ENCODE measurements at regions of chr2 and their contacts with region 1.

Region 1: DNA sequence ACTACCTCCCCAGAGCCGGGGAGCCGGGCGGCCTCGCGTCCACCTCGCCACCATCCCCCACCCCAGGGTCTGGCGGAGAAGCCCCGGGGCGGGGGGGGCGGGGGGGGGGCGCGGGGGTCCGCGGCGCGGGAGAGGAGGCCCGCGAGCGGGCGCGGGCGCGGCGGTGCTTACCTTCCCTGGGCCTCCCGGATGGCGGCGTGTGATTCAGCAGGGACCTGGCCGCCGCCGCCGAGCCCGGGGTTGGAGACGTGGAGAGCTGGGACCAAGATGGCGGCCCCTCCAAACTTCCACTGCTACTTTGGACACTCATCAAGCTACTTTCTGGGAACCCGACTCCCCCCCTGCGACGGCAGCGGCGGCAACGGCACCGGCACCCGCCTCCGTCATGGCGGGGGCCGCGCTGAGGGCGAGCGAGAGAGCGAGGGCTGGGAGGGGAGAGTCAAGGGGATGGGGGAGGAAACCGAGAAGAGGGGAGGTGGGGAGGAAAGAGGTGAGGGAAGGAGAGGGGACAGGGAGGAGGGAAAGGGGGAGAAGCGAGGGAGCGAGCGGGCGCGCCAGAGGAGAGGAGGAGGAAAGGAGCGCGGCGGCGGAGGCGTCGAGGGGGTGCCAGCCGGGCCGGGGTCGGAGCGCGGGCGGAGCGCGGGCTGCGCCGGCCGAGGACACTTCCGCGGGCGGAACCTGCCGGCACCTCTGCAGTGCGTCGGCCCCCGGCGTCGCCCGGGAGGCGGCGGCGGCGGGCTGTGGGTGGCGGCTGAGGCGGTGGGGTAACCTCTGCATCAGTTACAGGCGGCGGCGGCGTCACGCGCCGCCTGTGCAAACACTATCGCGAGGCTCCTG is at the start of gene TLK1:
- DNase-seq: peak; percentile 75
- H3K4me3 ChIP-seq: peak within 1 kb of the TSS; percentile 83 to 97 (median 93)
- H3K27ac ChIP-seq: peak within 1 kb of the TSS; percentile 72
- H3K4me1 ChIP-seq: no peaks in the 10 kb centered on the region
- H3K27me3 ChIP-seq: no peaks in the 10 kb centered on the region
- CTCF ChIP-seq: peak in 1 of 2 donors; percentile 26
- total RNA-seq, gene TLK1: 15.8 to 60.1 TPM

Region 2: GRCh38 chr2:170973492-170974303 is 186.6 kb before region 1 on chr2:
- CTCF ChIA-PET with region 1: no interaction called
- dilution Hi-C with region 1: no loop called
- in situ Hi-C with region 1: no loop called
- intact Hi-C with region 1: loop called (anchors 1 kb)
- DNase-seq: peak; percentile 9
- H3K4me3 ChIP-seq: peak overlapping the region; percentile 51 to 69 (median 65)
- H3K27ac ChIP-seq: peak overlapping the region; percentile 16
- H3K4me1 ChIP-seq: peaks cover 15% of the 10 kb centered on the region
- H3K27me3 ChIP-seq: no peaks in the 10 kb centered on the region
- CTCF ChIP-seq: peak; percentile 68 to 75

Region 3: DNA sequence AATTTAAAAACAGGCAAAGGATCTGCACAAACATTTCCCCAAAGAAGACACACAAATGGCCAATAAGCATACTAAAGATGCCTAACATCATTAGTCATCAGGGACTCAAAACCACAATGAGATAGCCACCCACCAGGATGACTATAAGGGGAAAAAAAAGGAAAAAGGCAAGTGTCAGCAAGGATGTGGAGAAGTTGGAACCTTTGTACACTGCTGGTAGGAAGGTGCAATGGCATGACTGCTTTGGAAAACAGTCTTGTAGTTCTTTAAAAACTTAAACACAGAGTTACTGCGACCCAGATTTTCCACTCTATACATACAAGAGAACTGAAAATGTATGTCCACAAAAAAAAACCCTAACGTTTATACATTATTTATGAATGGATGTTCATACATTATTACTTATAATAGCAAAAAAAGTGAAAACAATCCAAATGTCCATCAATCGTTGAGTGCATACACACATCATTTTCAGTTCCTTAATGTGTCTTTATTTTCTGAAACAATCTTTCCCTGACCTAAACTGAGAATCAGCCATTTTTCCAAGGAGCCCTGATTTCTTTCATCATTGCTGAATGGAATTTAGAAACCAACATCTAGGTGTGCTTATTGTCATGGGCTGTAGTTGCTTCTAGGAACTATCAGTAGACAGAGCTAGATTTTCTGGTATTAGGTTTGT is 65.1 kb after region 1 on chr2:
- CTCF ChIA-PET with region 1: no interaction called
- dilution Hi-C with region 1: no loop called
- in situ Hi-C with region 1: no loop called
- intact Hi-C with region 1: loop called (anchors 2 kb)
- DNase-seq: peak; percentile 91
- H3K4me3 ChIP-seq: peak overlapping the region in 1 of 3 experiments; percentile 20
- H3K27ac ChIP-seq: no peak overlapping the region
- H3K4me1 ChIP-seq: peaks cover 28% of the 10 kb centered on the region
- H3K27me3 ChIP-seq: no peaks in the 10 kb centered on the region
- CTCF ChIP-seq: peak; percentile 55 to 68

Region 4: DNA sequence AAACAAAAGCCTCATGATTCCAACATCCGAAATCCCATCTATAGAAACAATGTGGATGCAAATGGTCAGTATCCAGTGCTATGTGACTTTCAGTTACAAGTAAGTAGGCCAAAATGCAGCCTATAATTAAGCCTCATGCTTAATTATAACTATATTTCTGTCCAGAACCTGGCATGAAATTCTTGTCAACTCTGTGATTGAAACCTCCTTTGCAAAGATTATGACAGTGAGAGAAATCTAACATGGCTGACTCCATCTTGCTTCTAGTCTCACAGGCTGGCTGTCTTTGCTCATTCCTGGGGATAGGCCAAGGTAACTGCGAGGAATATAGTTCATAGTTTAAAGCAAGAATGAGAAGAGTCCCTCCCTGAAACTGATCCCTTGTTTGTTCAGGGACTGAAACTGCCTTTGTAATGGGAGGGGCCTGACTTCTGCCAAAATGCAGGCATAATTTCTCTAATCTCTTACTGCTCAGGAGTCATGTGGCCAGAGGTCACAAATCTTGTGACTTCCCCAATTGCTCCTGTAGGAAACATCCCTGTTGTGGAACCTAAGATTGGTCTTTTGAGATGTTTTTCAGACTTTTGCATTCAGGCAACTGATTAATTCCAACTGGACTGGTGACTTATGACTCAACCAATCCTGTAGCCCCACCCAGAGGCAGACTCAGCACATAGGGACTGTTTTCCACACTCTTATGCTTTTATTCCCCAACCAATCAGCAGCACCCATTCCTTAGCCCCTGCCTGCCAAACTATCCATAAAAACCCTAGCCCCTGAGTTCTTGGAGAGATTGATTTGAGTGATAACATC is 84.8 kb after region 1 on chr2:
- CTCF ChIA-PET with region 1: no interaction called
- dilution Hi-C with region 1: no loop called
- in situ Hi-C with region 1: no loop called
- intact Hi-C with region 1: loop called (anchors 2 kb)
- DNase-seq: peak; percentile 37
- H3K4me3 ChIP-seq: no peak overlapping the region
- H3K27ac ChIP-seq: no peak overlapping the region
- H3K4me1 ChIP-seq: peaks cover 5% of the 10 kb centered on the region
- H3K27me3 ChIP-seq: no peaks in the 10 kb centered on the region
- CTCF ChIP-seq: peak; percentile 9 to 35

Region 5: DNA sequence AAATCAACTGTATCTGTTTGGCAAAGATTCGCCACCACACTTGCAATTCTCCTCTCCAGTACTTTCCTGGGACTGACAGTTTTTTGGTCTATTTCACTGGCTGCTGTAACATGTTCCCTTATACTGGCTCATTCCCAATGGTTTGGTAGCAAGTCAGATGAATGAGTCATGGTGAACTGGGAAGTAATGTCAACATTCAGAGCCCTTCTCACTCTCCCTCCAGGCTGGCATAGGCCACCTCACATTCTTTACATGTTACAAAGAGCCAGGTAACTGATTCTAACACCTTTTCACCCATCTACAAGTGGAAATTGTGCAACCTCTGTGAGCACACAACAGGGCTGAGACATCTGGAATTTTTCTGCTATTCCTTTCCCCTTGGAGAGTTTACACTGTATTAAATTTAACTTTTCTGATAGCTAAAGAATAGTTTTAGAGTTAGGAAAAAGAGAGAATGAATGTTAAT is 111.7 kb after region 1 on chr2:
- CTCF ChIA-PET with region 1: no interaction called
- dilution Hi-C with region 1: no loop called
- in situ Hi-C with region 1: no loop called
- intact Hi-C with region 1: loop called (anchors 1 kb)
- DNase-seq: peak; percentile 98
- H3K4me3 ChIP-seq: no peak overlapping the region
- H3K27ac ChIP-seq: peak overlapping the region; percentile 50
- H3K4me1 ChIP-seq: peaks cover 17% of the 10 kb centered on the region
- H3K27me3 ChIP-seq: no peaks in the 10 kb centered on the region
- CTCF ChIP-seq: no peak

Region 6: GRCh38 chr2:171307560-171307959 is 147.2 kb after region 1 on chr2:
- CTCF ChIA-PET with region 1: no interaction called
- dilution Hi-C with region 1: no loop called
- in situ Hi-C with region 1: no loop called
- intact Hi-C with region 1: loop called (anchors 10 kb)
- DNase-seq: no peak
- H3K4me3 ChIP-seq: no peak overlapping the region
- H3K27ac ChIP-seq: no peak overlapping the region
- H3K4me1 ChIP-seq: no peaks in the 10 kb centered on the region
- H3K27me3 ChIP-seq: no peaks in the 10 kb centered on the region
- CTCF ChIP-seq: no peak

Region 7: DNA sequence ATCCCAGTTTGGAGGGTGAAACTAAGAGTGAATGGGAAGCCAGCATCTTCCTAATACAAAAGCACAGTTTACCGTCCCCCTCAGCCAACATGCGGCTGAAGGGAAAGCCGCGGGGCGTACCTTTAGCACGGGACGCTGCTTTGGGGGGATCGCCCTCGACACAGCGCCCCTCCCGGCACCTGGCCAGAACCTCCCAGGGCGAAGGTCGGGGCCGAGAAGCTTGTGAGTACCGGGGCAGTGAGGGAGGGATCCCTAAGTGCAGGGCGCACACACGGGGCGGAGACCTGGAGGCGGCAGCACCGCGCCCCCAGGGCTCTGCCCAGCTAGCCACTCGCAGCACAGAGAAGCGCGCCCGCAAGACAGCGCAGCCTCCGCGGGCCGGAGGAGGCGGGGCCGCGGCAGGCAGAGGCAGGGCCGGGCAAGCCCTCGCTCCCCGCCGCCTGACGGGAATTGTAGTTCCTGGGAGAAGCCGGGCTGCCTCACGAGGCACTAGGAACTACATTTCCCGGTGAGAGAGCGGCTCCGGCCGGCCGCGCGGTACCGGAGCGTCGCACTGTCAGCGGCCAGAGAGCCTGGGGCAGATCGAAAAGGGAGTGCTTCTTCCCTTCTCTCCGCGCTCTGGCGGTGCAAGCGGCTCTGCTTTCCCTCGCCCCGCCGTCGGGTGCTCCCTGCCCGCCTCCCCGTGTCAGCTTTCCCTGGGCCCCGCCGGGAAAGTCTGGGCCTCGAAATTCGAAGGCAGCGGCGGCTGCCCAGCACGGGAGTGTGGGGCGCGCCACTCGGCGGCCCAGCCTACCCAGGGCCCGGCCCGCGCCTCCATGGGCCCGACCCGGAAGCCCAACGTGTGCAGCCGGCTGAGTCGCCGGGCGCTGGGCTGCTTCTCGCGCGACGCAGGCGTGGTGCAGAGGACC is 273.7 kb after region 1 on chr2 and contains the starts of genes DCAF17 and METTL8:
- CTCF ChIA-PET with region 1: no interaction called
- dilution Hi-C with region 1: no loop called
- in situ Hi-C with region 1: no loop called
- intact Hi-C with region 1: loop called (anchors 5 kb)
- DNase-seq: peak; percentile 98
- H3K4me3 ChIP-seq: peak within 1 kb of the TSS; percentile 73 to 97 (median 88)
- H3K27ac ChIP-seq: peak within 1 kb of the TSS; percentile 92
- H3K4me1 ChIP-seq: peaks cover 28% of the 10 kb centered on the region
- H3K27me3 ChIP-seq: no peaks in the 10 kb centered on the region
- CTCF ChIP-seq: peak in 1 of 2 donors; percentile 30
- total RNA-seq, gene DCAF17: 22.8 to 25.2 TPM
- total RNA-seq, gene METTL8: 49.7 to 57.0 TPM